ENCODE measurements at regions of chr5 and their contacts with region 1.

Region 1: GRCh38 chr5:170791325-170791954 is 7.9 kb downstream of the GABRP start:
- DNase-seq: no peak
- H3K4me3 ChIP-seq: no peak overlapping the region
- H3K27ac ChIP-seq: no peak overlapping the region
- H3K4me1 ChIP-seq: peaks cover 0 to 9% (median 0%) of the 10 kb centered on the region in 3 donors
- H3K27me3 ChIP-seq: no peaks in the 10 kb centered on the region
- CTCF ChIP-seq: peak in 5 of 6 experiments; percentile 40 to 68 (median 65)
- POLR2A ChIP-seq: no peak

Region 2: GRCh38 chr5:170504031-170504596 is 287.3 kb before region 1 on chr5:
- intact Hi-C with region 1: no loop called
- DNase-seq: no peak
- H3K4me3 ChIP-seq: peak overlapping the region in 3 of 4 donors; percentile 12 to 63 (median 41)
- H3K27ac ChIP-seq: no peak overlapping the region
- H3K4me1 ChIP-seq: peaks cover 0 to 10% (median 2%) of the 10 kb centered on the region in 3 donors
- H3K27me3 ChIP-seq: peaks cover 0 to 66% (median 2%) of the 10 kb centered on the region in 4 donors
- CTCF ChIP-seq: no peak
- POLR2A ChIP-seq: no peak

Region 3: GRCh38 chr5:170740551-170741205 is 50.8 kb before region 1 on chr5:
- intact Hi-C with region 1: loop called (anchors 5 kb)
- DNase-seq: no peak
- H3K4me3 ChIP-seq: no peak overlapping the region
- H3K27ac ChIP-seq: no peak overlapping the region
- H3K4me1 ChIP-seq: peaks cover 4 to 19% (median 16%) of the 10 kb centered on the region in 3 donors
- H3K27me3 ChIP-seq: peaks cover 0 to 20% (median 0%) of the 10 kb centered on the region in 4 donors
- CTCF ChIP-seq: no peak
- POLR2A ChIP-seq: no peak